Activated naive CD4-positive, alpha-beta T cell treated with anti-CD3 and anti-CD28 coated beads for 36 hours (primary cell): ENCODE measurements at regions of chr6 and their contacts with region 1.

Region 1: DNA sequence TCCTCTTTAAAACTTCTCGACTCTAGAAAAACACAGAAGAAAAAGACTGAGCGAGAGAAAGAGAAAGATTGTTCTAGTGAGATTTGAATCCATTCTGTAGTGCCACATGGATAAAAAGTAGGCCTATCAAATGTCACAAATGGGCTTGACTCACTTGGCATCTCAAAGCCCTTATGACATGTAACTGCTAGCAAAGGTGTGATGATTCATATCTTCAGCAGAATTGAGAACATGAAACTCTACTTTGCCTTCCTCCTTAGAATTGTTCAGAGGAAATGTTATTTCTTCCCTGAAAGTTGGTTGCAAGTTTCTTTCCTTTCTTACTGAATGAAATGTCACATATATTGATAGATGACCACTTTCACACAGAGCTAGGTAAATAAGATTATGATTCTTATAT is 40.4 kb upstream of the DUSP22 start:
- DNase-seq: no peak
- H3K4me3 Mint-ChIP-seq: no peak overlapping the region
- H3K27ac Mint-ChIP-seq: peak overlapping the region; percentile 63
- H3K4me1 Mint-ChIP-seq: peaks cover 43% of the 10 kb centered on the region
- H3K27me3 Mint-ChIP-seq: no peaks in the 10 kb centered on the region

Region 2: DNA sequence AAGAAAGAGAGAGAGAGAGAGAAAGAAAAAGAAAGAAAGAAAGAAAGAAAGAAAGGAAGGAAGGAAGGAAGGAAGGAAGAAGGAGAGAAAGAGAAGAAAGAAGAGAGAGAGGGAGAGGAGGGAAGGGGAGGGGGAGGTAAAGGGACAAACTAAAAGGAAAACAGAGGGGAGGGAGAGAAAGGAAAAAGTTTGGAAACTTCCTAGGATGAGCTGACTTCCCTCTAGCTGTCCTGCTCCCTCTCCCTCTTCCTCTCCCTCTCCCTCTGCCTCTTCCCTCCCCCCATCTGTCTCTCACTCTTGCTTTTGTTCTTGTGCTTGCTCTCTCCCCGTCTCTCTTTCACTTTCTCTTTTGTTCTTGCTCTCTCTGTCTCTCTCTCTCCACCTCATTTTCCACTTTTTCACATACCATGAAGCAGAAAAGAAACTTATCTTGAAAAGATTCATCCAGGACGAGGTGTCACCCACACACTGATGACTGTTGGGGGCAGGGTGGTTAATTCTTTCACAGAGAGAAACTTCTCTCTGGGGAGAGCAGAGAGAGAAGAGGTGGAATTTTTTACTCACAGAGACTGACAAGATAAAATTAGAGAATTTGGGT is 16.1 kb before region 1 on chr6:
- CTCF ChIA-PET with region 1: interaction called, 4 read pairs
- intact Hi-C with region 1: loop called (anchors 1 kb)
- DNase-seq: peak; percentile 88
- H3K4me3 Mint-ChIP-seq: peak overlapping the region; percentile 52
- H3K27ac Mint-ChIP-seq: peak overlapping the region; percentile 86
- H3K4me1 Mint-ChIP-seq: peaks cover 41% of the 10 kb centered on the region
- H3K27me3 Mint-ChIP-seq: no peaks in the 10 kb centered on the region

Region 3: DNA sequence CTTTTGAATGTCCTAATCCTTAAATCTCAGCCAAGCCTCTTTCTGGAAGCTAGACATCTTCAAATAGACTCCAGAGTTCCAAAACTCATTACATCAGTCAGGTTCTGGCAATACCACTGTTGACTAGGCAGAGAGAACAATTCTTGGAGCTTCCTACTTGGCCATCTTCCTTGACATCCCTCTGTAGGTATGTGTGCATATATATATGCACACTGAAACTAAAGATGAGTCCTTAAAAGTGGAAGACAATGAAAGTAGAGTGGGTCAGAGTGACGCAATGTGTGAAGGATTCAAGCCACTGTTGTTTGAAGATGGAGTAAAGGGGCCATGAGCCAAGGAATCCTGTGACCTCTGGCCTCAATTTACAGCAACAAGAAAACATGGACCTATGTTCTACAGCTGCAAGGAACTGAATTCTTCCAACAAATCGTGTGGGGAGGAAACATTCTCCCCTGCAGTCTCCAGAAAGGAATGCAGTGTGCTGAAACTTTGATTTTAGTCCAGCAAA is 21.7 kb after region 1 on chr6:
- CTCF ChIA-PET with region 1: no interaction called
- intact Hi-C with region 1: loop called (anchors 2 kb)
- DNase-seq: no peak
- H3K4me3 Mint-ChIP-seq: no peak overlapping the region
- H3K27ac Mint-ChIP-seq: no peak overlapping the region
- H3K4me1 Mint-ChIP-seq: peaks cover 23% of the 10 kb centered on the region
- H3K27me3 Mint-ChIP-seq: no peaks in the 10 kb centered on the region